Activated naive CD4-positive, alpha-beta T cell treated with anti-CD3 and anti-CD28 coated beads, Interleukin-2, amount 10 ng/mL, durations not matched to agents 7 days and 5 days (primary cell): ENCODE measurements at regions of chr17 and their contacts with region 1.

Region 1: GRCh38 chr17:38868817-38869525 is 887 bp upstream of the LASP1 start:
- DNase-seq: peak; percentile 88
- H3K4me3 Mint-ChIP-seq: peak overlapping the region; percentile 98
- H3K27ac Mint-ChIP-seq: peak overlapping the region; percentile 99
- H3K4me1 Mint-ChIP-seq: peaks cover 51% of the 10 kb centered on the region
- H3K27me3 Mint-ChIP-seq: peaks cover 16% of the 10 kb centered on the region

Region 2: DNA sequence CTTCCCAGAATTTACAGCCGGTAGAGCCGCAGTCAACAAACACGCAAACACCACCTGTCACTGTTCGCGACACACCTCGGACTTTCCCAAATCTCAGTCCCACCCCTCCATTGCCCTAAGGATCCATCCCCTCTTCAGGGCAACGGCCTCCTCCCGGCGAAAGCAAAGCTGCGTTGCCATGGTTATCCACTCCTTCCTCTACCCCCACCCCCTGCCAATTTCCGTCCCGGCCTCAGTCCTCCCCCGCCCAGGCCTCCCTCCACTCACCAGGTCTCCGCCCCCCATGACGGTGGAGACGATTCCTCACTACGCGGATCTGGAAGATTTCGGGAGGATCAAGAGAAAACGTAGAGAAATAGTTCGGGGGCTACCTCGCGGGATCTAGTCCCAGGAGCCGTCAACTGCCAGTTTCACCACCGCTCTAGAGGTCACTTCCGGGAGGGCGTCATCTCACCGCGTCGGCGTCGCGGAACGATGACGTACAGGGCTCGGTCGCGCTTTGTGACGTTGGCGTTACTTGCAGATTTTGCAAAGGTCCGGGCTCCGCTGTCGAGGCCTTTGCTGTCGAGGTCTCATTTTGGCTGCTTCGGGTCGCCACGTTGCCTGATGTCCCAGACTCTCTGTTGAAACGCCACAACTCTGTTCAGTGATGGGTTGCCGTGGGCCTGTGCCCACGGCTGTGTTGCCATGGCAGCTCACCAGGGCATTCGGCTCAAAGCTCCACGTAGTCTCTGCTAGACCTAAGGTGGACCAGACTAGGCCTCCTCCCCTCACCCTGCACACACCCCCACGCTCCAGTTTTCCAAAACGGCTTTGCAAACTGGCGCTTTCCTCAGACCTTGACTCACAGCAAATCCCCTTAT is 43.8 kb before region 1 on chr17 and contains the start of gene CWC25:
- CTCF ChIA-PET with region 1: no interaction called
- DNase-seq: peak; percentile 94
- H3K4me3 Mint-ChIP-seq: peak within 1 kb of the TSS; percentile 95
- H3K27ac Mint-ChIP-seq: peak within 1 kb of the TSS; percentile 99
- H3K4me1 Mint-ChIP-seq: peaks cover 40% of the 10 kb centered on the region
- H3K27me3 Mint-ChIP-seq: no peaks in the 10 kb centered on the region

Region 3: DNA sequence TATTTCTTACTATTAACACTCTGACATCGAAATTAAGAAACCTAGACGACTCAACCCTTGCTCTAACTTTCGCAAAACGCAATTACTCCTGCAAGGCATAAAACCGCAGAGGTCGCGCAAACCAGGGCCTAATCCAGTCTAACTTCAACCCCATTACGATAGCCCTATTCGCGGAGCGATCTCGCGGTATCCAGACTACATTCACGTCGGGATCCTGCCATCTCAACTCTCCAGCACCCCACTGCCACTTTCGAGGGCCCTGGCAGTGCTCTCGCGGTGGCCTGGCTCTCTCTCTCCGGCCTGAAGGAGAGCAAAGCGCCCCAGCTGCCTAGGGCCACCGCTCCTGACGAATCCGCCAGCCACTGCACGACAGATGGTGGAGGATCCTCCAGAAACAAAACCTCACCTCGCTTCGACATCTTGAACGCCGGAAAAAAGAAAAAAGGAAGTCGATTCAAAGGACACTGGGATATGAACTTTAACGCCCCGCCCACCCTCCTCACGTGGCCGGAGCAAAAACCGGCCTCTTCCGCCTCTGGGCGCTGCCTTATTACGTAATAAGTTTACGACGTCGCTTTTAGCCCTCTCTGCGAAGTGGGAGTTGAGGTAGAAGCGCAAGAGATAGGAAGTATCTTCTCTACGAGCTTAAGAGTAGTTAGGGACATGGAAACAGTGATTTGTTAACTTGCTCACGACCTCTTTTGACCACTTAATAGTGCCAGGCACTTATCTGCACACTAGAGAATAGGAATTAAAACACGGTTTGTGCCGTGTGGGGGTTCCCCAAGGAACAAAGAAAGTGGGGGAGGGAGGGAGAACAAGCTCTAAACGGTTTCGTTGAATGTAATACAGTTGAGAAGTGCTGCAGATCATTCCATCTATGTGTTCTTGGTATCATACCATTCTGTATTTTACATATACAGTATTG is 15.4 kb before region 1 on chr17 and contains the start of gene RPL23:
- CTCF ChIA-PET with region 1: interaction called, 11 read pairs
- DNase-seq: peak; percentile 95
- H3K4me3 Mint-ChIP-seq: peak within 1 kb of the TSS; percentile 91
- H3K27ac Mint-ChIP-seq: peak within 1 kb of the TSS; percentile 98
- H3K4me1 Mint-ChIP-seq: peaks cover 46% of the 10 kb centered on the region
- H3K27me3 Mint-ChIP-seq: no peaks in the 10 kb centered on the region

Region 4: DNA sequence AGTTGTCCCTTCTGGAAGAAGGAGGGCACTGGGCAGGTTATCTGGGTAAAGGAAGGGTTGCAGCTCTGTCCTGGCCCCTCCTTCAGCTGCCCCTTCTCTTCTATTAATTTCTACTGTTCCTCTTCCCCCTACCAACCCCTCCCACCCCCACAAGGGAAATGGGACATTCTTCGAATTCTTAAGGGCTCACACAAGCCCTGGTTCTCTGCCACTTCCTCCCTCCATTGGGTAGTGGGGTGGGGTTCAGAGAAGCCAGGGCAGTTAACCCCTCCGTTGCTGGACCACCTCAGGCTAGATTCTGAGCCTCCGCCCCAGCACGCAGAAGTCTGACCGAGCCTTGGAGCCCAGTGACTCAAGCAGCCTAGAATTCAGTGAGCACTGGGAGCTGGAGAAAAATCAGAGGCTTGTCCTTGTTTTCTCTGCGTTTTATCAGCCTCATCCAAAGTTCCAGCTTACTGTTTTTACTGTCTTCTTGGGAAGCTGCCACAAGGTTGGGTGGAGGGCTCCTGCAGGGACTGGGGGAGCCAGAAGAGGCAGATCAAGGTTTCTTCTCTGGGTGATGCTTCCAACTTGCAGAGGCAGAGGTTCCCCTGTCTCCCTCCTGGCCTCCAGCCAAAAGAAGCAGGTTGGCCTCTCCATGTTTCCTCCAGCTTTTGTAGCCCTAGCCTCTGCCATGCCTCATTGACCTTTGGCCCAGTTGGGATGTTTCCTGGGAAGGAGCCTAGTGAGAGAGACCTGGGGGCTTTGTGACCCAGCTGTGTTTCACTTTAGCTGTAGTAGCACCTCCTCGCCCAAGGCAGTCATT is 11.1 kb after region 1 on chr17:
- CTCF ChIA-PET with region 1: interaction called, 14 read pairs
- DNase-seq: peak; percentile 54
- H3K4me3 Mint-ChIP-seq: peak overlapping the region; percentile 62
- H3K27ac Mint-ChIP-seq: peak overlapping the region; percentile 77
- H3K4me1 Mint-ChIP-seq: peaks cover 93% of the 10 kb centered on the region
- H3K27me3 Mint-ChIP-seq: no peaks in the 10 kb centered on the region

Region 5: DNA sequence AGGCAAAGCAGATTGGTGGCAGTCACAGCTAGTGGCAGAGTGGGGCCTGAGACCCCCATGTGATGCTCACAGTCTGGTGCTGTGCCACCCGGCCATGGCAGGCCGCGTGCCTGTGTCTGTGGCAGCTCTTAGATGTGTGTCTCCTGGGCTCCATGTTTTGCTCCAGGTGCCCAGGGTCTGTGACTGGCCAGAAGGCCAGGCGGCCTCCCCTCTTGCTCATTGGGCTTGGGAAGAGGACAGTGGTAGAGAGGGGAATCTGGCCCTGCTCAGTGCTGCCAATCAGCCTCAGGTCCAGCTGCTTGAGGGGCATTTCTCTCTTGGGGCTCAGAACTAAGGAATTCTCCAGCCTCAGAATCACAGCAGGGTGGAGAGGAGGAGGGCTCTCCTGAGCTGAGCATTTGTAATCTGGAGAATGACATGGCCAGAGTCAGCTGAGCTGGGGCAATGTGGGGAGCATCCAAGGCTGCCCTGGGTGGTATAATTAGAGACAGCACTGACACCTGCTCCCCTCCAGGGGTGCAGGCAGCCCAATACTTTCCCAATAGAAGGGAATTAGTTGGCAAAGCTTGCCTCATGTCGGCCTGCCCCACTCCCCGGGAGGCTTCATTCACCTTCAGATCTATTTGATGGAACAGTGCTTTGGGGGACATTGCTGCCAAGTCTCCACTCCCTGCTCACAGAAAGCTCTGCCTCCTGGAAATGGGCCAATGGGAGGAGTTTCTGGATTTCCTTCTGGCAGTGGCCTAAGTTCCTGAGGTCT is 53.7 kb after region 1 on chr17:
- CTCF ChIA-PET with region 1: interaction called, 13 read pairs
- DNase-seq: peak; percentile 19
- H3K4me3 Mint-ChIP-seq: no peak overlapping the region
- H3K27ac Mint-ChIP-seq: no peak overlapping the region
- H3K4me1 Mint-ChIP-seq: peaks cover 30% of the 10 kb centered on the region
- H3K27me3 Mint-ChIP-seq: no peaks in the 10 kb centered on the region

Region 6: GRCh38 chr17:38994026-38994425 is 125.1 kb after region 1 on chr17:
- CTCF ChIA-PET with region 1: no interaction called
- DNase-seq: no peak
- H3K4me3 Mint-ChIP-seq: no peak overlapping the region
- H3K27ac Mint-ChIP-seq: no peak overlapping the region
- H3K4me1 Mint-ChIP-seq: no peaks in the 10 kb centered on the region
- H3K27me3 Mint-ChIP-seq: peaks cover 19% of the 10 kb centered on the region